Ovary (tissue), 10 donors: ENCODE measurements at regions of chr14 and their contacts with region 1.

Region 1: GRCh38 chr14:104708606-104709268 is 15.3 kb upstream of the ADSS1 start:
- DNase-seq: peak; percentile 49 to 82 (median 77)
- H3K4me3 ChIP-seq: no peak overlapping the region
- H3K27ac ChIP-seq: no peak overlapping the region
- H3K4me1 ChIP-seq: no peaks in the 10 kb centered on the region
- H3K27me3 ChIP-seq: no peaks in the 10 kb centered on the region
- CTCF ChIP-seq: peak; percentile 80 to 96 (median 95)
- EP300 ChIP-seq: no peak
- POLR2A ChIP-seq: no peak

Region 2: GRCh38 chr14:104650057-104650981 is 58.4 kb before region 1 on chr14:
- intact Hi-C with region 1: loop called (anchors 2 to 5 kb)
- DNase-seq: peak; percentile 50 to 82 (median 70)
- H3K4me3 ChIP-seq: peak overlapping the region; percentile 6
- H3K27ac ChIP-seq: no peak overlapping the region
- H3K4me1 ChIP-seq: peaks cover 3% of the 10 kb centered on the region
- H3K27me3 ChIP-seq: no peaks in the 10 kb centered on the region
- CTCF ChIP-seq: peak; percentile 71 to 81 (median 78)
- EP300 ChIP-seq: no peak
- POLR2A ChIP-seq: no peak